ENCODE measurements at regions of chr1 and their contacts with region 1.

Region 1: GRCh38 chr1:205255941-205256780 is 28.4 kb downstream of the TMCC2 start:
- DNase-seq: peak; percentile 95
- ATAC-seq: peak; percentile 98
- H3K4me3 ChIP-seq: no peak overlapping the region
- H3K27ac ChIP-seq: no peak overlapping the region
- H3K4me1 ChIP-seq: peaks cover 12% of the 10 kb centered on the region
- H3K27me3 ChIP-seq: no peaks in the 10 kb centered on the region
- CTCF ChIP-seq: peak; percentile 98

Region 2: DNA sequence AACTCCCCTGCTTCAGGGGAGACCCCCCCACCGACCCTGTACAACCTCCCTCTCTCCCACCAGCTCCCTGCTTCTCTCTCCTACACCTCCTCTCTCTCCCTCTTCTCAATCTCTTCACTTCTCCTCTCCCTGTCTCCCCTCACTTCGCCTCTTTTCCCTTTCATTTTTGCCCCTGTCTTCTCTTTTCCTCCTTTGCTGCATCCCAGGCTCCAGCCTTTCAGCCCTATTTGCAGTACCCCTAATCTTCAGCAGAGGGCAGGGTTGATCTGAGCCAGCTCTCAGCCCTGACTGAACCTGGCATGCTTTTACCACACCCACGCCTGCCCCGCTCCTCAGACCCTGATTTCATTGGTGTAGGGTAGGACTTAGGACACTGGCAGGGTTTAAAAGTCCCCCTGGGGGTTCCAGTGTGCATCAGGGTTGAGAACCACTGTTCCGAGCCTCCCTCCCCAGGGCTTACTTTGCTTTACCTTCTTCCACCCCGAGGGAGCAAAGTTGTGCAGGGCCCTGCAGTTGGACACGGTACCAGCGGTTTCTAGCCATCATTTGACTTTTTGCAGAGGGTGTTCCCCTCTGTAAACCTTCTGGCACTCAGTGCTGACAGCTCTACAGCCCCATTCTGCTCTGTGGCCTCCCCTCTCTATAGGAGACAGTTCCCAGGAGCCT is 280.5 kb before region 1 on chr1:
- CTCF ChIA-PET with region 1: no interaction called
- POLR2A ChIA-PET with region 1: no interaction called
- intact Hi-C with region 1: loop called (anchors 1 kb)
- DNase-seq: peak; percentile 89
- ATAC-seq: peak; percentile 82
- H3K4me3 ChIP-seq: no peak overlapping the region
- H3K27ac ChIP-seq: no peak overlapping the region
- H3K4me1 ChIP-seq: peaks cover 5% of the 10 kb centered on the region
- H3K27me3 ChIP-seq: peaks cover 26% of the 10 kb centered on the region
- CTCF ChIP-seq: peak; percentile 98

Region 3: GRCh38 chr1:205061665-205062069 is 194.5 kb before region 1 on chr1:
- CTCF ChIA-PET with region 1: interaction called, 11 read pairs
- POLR2A ChIA-PET with region 1: no interaction called
- intact Hi-C with region 1: loop called (anchors 5 kb)
- DNase-seq: peak; percentile 97
- ATAC-seq: peak; percentile 86
- H3K4me3 ChIP-seq: no peak overlapping the region
- H3K27ac ChIP-seq: no peak overlapping the region
- H3K4me1 ChIP-seq: no peaks in the 10 kb centered on the region
- H3K27me3 ChIP-seq: peaks cover 8% of the 10 kb centered on the region; the same call in 1 of the 2 replicates
- CTCF ChIP-seq: peak; percentile 99

Region 4: DNA sequence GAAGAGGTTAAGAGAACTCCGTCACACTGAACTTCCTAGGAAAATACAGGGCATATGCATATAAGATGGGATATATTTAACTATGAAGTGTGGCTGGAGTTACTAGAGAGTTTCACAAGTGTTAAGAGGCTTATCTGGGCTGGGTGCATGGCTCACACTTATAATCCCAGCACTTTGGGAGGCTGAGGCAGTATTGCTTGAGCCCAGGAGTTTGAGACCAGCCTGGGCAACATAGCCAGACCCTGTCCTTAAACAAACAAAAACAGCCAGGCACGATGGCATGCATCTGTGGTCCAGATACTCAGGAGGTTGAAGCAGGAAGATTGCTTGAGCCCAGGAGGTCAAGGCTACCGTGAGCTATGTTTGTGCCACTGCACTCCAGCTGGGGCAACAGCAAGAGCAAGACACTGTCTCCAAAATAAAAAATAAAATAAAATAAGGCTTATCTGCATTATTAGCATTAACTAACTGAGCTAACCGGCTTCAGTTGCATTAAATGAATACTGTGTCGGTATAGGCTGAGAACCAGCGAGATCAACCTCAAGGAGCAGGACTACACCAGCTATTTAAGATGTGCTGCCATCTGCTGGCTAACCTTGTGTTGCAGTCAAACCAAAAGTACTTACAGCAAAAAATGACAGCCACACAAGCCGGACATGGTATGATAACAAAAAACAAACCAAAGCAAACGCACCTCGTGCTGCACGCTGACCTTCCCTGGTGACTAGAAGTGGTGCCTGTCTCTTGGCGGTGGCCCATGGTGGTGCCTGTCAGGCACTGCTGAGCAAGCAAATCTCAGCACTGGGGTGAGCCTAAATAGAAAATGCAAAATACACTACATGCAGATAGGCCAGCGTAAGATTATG is 114.7 kb before region 1 on chr1:
- CTCF ChIA-PET with region 1: interaction called, 5 read pairs
- POLR2A ChIA-PET with region 1: no interaction called
- intact Hi-C with region 1: loop called (anchors 5 kb)
- DNase-seq: peak; percentile 90
- ATAC-seq: peak; percentile 92
- H3K4me3 ChIP-seq: no peak overlapping the region
- H3K27ac ChIP-seq: no peak overlapping the region
- H3K4me1 ChIP-seq: peaks cover 10% of the 10 kb centered on the region
- H3K27me3 ChIP-seq: no peaks in the 10 kb centered on the region
- CTCF ChIP-seq: peak; percentile 93

Region 5: DNA sequence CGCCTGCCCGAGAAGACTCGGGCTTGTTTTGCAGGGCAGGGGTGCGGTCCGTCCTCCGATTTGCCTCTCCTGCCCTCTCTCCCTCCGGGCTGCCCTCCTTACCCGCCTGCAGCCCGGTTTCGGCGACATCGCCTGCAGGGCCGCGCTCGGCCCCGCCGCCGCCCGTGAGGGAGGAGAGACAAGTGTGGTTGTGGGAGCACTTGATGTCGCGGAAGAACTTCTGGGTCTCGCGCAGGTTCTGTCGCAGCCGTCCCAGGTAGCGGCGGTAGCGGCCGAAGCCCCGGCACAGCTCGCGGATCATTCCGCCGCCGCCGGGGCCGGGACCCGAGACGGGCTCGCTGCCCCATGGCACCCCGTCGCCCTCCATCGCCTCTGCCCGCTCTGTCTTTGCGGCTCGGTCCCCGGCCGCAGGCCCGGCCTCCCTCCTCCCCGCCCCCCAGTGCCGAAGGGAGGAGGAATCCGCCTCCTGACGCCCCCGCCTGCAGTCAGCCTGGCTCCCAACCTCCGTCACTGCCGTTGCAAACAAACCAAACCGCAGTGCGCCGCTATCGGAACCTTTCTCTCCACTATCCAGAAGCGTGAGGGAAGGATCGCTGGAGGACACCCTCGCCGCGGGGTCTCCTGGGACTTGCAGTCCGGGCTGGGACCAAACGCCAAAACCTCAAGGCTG is 44.9 kb before region 1 on chr1 and contains the start of gene DSTYK:
- CTCF ChIA-PET with region 1: no interaction called
- POLR2A ChIA-PET with region 1: no interaction called
- intact Hi-C with region 1: loop called (anchors 1 kb)
- DNase-seq: peak; percentile 97
- ATAC-seq: peak; percentile 90
- H3K4me3 ChIP-seq: peak within 1 kb of the TSS; percentile 89
- H3K27ac ChIP-seq: peak within 1 kb of the TSS; percentile 71
- H3K4me1 ChIP-seq: peaks cover 10% of the 10 kb centered on the region; the same call in 1 of the 2 replicates
- H3K27me3 ChIP-seq: no peaks in the 10 kb centered on the region
- CTCF ChIP-seq: no peak
- total RNA-seq, gene DSTYK: 8.4 and 9.3 TPM in 2 replicates

Region 6: DNA sequence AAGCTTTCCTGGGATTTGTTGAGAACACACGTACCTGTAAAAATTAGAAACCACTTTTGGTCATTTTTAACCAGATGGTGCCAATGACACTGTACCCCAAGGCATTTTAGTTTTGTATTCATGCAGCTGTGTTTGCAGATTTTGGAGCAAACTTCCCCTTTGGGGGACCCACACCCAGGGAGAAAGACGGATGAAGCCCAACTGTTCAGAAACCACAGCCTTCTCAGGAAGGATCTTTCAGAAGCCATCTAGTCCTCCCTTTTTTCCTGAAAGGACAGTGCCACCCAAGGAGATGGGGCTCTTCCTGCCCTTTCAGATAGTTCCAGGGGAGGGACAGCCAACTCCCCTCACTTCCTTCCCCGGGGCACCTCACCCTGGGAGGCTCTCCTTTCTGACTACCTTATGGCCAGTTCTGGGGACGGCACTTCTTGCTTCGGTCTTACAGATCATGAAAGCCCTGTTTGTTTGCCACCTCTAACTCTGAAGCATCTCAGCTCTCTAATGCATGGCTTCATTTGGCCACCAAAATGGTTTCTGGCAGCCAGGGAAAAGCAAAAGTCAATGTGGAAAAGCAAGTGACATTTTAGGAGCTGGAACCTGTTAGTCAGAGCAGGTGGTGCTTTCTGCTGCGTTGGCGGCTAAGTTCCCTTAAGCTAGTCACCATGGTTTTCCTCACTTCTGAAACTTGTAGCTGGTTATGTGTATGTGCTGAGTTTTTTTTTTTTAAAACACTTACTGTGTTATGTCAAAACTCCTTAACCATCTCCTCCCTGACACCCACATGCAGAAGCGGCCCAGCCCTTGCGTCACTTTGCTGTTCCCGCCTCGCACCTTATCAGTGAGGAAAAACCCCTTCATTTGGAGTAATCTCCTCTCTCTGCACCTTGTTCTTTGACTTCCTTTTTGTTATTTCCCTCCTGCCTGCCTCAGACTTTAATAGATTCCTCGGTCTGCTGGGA is 18.4 kb before region 1 on chr1:
- CTCF ChIA-PET with region 1: no interaction called
- POLR2A ChIA-PET with region 1: no interaction called
- intact Hi-C with region 1: no loop called
- DNase-seq: no peak
- ATAC-seq: no peak
- H3K4me3 ChIP-seq: no peak overlapping the region
- H3K27ac ChIP-seq: no peak overlapping the region
- H3K4me1 ChIP-seq: no peaks in the 10 kb centered on the region
- H3K27me3 ChIP-seq: no peaks in the 10 kb centered on the region
- CTCF ChIP-seq: no peak

Measured in PC-3 (cell line).